CD4-positive, alpha-beta memory T cell (primary cell): ENCODE measurements at regions of chr20 and their contacts with region 1.

Region 1: DNA sequence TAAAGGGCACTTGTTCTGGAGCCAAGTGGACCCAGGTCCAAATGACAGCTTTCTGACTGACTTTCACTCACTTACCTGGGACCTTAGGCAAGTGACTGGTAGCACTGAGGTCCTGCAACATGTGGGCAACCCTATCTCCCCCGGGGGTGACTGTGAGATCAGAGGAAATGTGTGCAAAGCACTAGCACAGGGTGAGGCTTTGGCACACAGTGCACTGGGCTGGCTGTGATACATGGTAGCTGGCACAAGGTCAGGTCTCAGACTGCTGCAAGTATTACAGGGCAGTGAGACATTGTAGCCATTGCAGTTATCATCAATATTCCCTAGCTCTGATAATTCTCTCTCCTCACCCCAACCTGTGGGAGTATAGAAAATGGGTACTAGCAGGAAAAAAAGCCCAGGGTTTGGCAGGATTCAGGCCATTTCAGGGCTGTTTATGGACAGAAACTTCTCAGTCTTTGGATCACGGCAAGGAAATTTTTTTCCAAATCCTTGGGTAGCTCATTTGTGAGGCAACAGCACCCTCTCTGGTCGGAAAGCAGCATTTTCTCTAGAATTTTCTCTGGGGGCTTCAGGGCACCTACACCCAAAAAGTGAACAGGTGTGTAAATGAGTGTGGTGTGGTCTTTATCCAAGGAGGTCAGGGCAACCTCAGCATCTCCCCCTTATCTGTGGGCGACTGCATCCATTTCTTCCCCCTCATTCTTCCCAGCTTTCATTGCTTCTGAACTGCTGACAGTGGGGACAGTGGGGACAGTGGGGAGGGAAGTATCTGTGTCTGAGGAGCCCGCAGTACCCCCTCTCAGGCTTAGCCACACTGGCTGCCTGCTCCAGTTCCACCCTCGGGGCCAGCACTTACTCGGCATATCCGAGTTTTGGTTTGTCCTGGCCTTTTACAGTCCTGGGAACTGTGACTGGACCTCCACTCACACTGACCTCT is 148.7 kb upstream of the PHACTR3 start:
- DNase-seq: peak in 2 of 5 donors; percentile 0 to 1
- H3K4me3 ChIP-seq: no peak overlapping the region
- H3K4me3 Mint-ChIP-seq: no peak overlapping the region
- H3K27ac ChIP-seq: no peak overlapping the region
- H3K27ac Mint-ChIP-seq: no peak overlapping the region
- H3K4me1 ChIP-seq: no peaks in the 10 kb centered on the region
- H3K4me1 Mint-ChIP-seq: no peaks in the 10 kb centered on the region
- H3K27me3 ChIP-seq: no peaks in the 10 kb centered on the region
- H3K27me3 Mint-ChIP-seq: peaks cover 4 to 29% of the 10 kb centered on the region in 2 donors

Region 2: GRCh38 chr20:58192567-58192966 is 1263.1 kb before region 1 on chr20:
- CTCF ChIA-PET with region 1: no interaction called
- POLR2A ChIA-PET with region 1: no interaction called
- intact Hi-C with region 1: loop called (anchors 5 kb)
- DNase-seq: peak in 1 of 5 donors; percentile 12
- H3K4me3 ChIP-seq: no peak overlapping the region
- H3K4me3 Mint-ChIP-seq: no peak overlapping the region
- H3K27ac ChIP-seq: no peak overlapping the region
- H3K27ac Mint-ChIP-seq: no peak overlapping the region
- H3K4me1 ChIP-seq: no peaks in the 10 kb centered on the region
- H3K4me1 Mint-ChIP-seq: no peaks in the 10 kb centered on the region
- H3K27me3 ChIP-seq: no peaks in the 10 kb centered on the region
- H3K27me3 Mint-ChIP-seq: peaks cover 1 to 6% of the 10 kb centered on the region in 2 donors

Region 3: DNA sequence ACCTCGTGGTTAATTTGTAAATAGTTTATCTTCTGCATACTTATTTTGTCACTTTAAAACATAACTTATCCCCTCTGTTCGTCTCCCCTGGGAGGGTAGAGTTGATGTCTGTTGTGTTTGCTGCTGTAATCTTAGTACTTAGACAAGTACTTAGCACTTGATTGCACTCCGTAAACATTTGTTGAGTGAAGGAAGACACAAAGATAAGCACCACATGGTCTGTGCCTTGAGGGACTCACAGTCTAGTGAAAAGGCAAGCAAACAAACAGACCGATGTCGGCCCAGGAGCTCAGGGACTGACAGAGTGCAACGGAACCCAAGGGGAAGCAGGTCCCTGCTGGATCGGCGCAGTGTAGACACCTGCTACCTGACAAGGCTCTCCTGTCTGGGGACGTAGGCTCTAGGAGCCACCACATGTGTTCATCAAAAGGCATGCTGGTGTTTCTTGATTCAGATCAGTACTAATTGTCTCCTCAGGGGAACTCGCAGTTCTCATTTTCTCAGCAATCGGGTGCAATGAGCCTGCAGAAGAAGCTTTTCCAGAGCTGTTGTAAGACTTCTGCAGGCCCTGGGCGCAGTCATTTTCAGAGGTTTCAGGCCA is 123.8 kb before region 1 on chr20:
- CTCF ChIA-PET with region 1: no interaction called
- POLR2A ChIA-PET with region 1: no interaction called
- intact Hi-C with region 1: no loop called
- DNase-seq: no peak
- H3K4me3 ChIP-seq: no peak overlapping the region
- H3K4me3 Mint-ChIP-seq: no peak overlapping the region
- H3K27ac ChIP-seq: no peak overlapping the region
- H3K27ac Mint-ChIP-seq: no peak overlapping the region
- H3K4me1 ChIP-seq: no peaks in the 10 kb centered on the region
- H3K4me1 Mint-ChIP-seq: no peaks in the 10 kb centered on the region
- H3K27me3 ChIP-seq: peaks cover 3% of the 10 kb centered on the region
- H3K27me3 Mint-ChIP-seq: peaks cover 11 to 12% of the 10 kb centered on the region in 2 donors

Region 4: GRCh38 chr20:59341805-59342634 is 113.7 kb before region 1 on chr20:
- CTCF ChIA-PET with region 1: no interaction called
- POLR2A ChIA-PET with region 1: no interaction called
- intact Hi-C with region 1: no loop called
- DNase-seq: no peak
- H3K4me3 ChIP-seq: no peak overlapping the region
- H3K4me3 Mint-ChIP-seq: no peak overlapping the region
- H3K27ac ChIP-seq: no peak overlapping the region
- H3K27ac Mint-ChIP-seq: no peak overlapping the region
- H3K4me1 ChIP-seq: no peaks in the 10 kb centered on the region
- H3K4me1 Mint-ChIP-seq: no peaks in the 10 kb centered on the region
- H3K27me3 ChIP-seq: no peaks in the 10 kb centered on the region
- H3K27me3 Mint-ChIP-seq: no peaks in the 10 kb centered on the region

Region 5: DNA sequence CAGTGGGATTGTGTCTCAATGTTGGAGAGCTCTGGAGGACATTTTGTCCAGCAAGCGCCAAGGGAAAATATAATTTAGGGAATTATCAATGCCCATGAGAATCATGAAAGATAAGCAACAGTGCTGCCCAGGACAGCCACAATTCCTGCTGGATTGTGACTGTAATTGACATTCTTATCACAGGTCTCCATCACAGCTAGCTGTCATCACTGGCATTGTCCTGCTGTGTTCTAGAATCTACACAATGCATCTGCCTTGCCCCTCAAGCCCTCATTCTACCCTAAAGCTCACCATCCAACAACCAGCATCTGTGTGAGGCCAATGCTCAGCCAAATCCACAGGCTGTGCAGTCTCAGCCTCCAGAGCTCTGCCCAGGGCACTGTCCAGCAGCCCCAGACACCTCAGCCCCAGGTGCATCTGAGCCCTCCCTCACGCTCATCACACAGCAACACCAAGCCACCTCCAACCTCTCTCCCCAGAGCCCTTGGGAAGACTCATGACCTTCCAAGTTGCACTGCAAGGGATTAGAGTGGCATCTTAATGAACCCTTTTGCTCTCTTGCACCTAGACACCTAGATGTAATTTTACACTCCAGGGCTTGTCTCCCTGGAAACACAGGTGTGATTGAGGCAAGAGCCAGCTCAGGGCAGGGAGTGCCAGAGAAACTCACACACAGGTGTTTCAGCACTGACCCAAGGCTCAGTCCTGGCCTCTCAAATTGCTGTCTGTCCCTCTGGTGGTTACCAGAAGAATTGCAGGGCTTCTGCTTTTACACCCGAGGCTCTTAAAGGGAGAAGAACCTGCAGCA is 63.4 kb after region 1 on chr20:
- CTCF ChIA-PET with region 1: no interaction called
- POLR2A ChIA-PET with region 1: no interaction called
- intact Hi-C with region 1: no loop called
- DNase-seq: peak; percentile 18 to 38 (median 32)
- H3K4me3 ChIP-seq: no peak overlapping the region
- H3K4me3 Mint-ChIP-seq: no peak overlapping the region
- H3K27ac ChIP-seq: no peak overlapping the region
- H3K27ac Mint-ChIP-seq: no peak overlapping the region
- H3K4me1 ChIP-seq: no peaks in the 10 kb centered on the region
- H3K4me1 Mint-ChIP-seq: no peaks in the 10 kb centered on the region
- H3K27me3 ChIP-seq: peaks cover 8% of the 10 kb centered on the region
- H3K27me3 Mint-ChIP-seq: peaks cover 41 to 49% of the 10 kb centered on the region in 2 donors